ENCODE measurements at regions of chr20 and their contacts with region 1.

Region 1: DNA sequence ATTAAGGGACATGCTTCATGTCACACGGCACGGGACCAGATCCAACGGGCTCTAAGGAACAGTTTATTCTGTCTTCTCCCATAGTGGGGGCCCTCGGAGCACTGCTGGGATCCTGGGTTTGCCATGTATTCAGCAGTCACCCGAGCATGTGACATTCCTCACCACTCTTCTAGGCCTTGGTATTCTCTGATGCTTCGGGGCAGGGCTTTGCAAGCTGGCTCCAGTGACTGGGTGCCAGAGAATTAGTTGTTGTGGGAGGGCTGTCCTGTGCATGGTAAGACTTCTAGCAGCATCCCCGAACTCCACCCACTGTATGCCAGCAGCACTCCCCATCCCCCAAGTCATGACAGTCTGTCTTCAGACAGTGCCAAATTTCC is 5.4 kb downstream of the CCN5 start:
- DNase-seq: peak; percentile 25
- ATAC-seq: peak; percentile 75
- H3K4me3 ChIP-seq: no peak overlapping the region
- H3K27ac ChIP-seq: peak overlapping the region; percentile 39; the same call in 1 of the 2 replicates
- H3K4me1 ChIP-seq: peaks cover 5% of the 10 kb centered on the region; the same call in 1 of the 2 replicates
- H3K27me3 ChIP-seq: peaks cover 4% of the 10 kb centered on the region; the same call in 1 of the 2 replicates
- CTCF ChIP-seq: no peak
- POLR2A ChIP-seq: no peak
- RAD21 ChIP-seq: no peak

Region 2: GRCh38 chr20:43799150-43799711 is 921.4 kb before region 1 on chr20:
- CTCF ChIA-PET with region 1: no interaction called
- POLR2A ChIA-PET with region 1: interaction called, 10 read pairs
- dilution Hi-C with region 1: no loop called
- in situ Hi-C with region 1: no loop called
- intact Hi-C with region 1: no loop called
- DNase-seq: peak; percentile 37
- ATAC-seq: peak; percentile 53
- H3K4me3 ChIP-seq: no peak overlapping the region
- H3K27ac ChIP-seq: no peak overlapping the region
- H3K4me1 ChIP-seq: peaks cover 3% of the 10 kb centered on the region; the same call in 1 of the 2 replicates
- H3K27me3 ChIP-seq: 0 out of 2 replicates have a peak, but pooled peaks cover 2% of the 10 kb centered on the region
- CTCF ChIP-seq: no peak
- POLR2A ChIP-seq: no peak
- RAD21 ChIP-seq: no peak

Region 3: GRCh38 chr20:44692932-44693476 is 27.6 kb before region 1 on chr20:
- CTCF ChIA-PET with region 1: no interaction called
- POLR2A ChIA-PET with region 1: no interaction called
- dilution Hi-C with region 1: no loop called
- in situ Hi-C with region 1: no loop called
- intact Hi-C with region 1: loop called (anchors 2 kb)
- DNase-seq: peak; percentile 93
- ATAC-seq: peak; percentile 90
- H3K4me3 ChIP-seq: no peak overlapping the region
- H3K27ac ChIP-seq: peak overlapping the region; percentile 66
- H3K4me1 ChIP-seq: peaks cover 29% of the 10 kb centered on the region
- H3K27me3 ChIP-seq: peaks cover 2% of the 10 kb centered on the region; the same call in 1 of the 2 replicates
- CTCF ChIP-seq: no peak
- POLR2A ChIP-seq: no peak
- RAD21 ChIP-seq: no peak

Measured in IMR-90 (cell line).